ENCODE measurements at regions of chr2 and their contacts with region 1.

Region 1: GRCh38 chr2:144834998-144835633 is 315.2 kb upstream of the ZEB2 start:
- DNase-seq: no peak
- H3K4me3 ChIP-seq: no peak overlapping the region
- CTCF ChIP-seq: no peak
- POLR2A ChIP-seq: no peak

Region 2: DNA sequence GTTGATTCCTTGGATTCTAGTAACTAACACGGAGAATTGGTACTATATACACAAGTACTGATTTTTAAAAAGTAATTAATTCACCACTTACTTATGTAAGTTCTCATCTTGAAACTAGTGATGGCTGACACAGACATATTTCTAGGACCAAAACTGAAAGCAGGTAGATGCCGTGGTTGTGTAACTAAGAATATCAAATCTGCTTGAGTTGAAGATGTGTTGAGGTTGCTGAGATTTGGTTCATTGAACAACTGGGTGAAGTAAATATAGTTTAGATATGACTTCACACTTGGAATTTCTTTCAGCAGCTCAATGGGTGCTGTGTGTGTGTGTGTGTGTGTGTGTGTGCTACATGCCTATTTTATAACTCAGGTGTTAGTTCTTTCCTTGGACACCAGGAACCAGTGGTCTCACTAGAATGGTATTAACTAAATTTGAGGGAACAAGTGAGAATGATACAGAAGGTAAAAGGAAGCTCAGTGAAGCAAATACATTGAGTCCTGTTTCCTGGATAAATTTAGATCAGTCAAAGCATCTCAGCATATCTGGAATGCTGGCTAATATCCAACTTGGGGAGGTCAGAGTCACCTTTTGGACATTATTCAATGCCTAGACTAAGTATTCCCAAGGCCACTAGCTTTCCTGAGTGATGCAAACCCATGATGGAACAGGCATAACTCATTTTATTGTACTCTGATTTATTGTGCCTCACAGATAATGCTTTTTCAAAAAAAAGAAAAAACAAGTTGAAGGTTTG is 204.5 kb before region 1 on chr2:
- intact Hi-C with region 1: no loop called
- DNase-seq: no peak
- H3K4me3 ChIP-seq: no peak overlapping the region
- CTCF ChIP-seq: no peak
- POLR2A ChIP-seq: no peak

Region 3: GRCh38 chr2:144812288-144812687 is 22.8 kb before region 1 on chr2:
- intact Hi-C with region 1: loop called (anchors 1 kb)
- DNase-seq: no peak
- H3K4me3 ChIP-seq: no peak overlapping the region
- CTCF ChIP-seq: no peak
- POLR2A ChIP-seq: no peak

Region 4: GRCh38 chr2:144876013-144876412 is 40.9 kb after region 1 on chr2:
- intact Hi-C with region 1: no loop called
- DNase-seq: no peak
- H3K4me3 ChIP-seq: no peak overlapping the region
- CTCF ChIP-seq: no peak
- POLR2A ChIP-seq: no peak